CD14-positive monocyte (primary cell): ENCODE measurements at regions of chr1 and their contacts with region 1.

Region 1: DNA sequence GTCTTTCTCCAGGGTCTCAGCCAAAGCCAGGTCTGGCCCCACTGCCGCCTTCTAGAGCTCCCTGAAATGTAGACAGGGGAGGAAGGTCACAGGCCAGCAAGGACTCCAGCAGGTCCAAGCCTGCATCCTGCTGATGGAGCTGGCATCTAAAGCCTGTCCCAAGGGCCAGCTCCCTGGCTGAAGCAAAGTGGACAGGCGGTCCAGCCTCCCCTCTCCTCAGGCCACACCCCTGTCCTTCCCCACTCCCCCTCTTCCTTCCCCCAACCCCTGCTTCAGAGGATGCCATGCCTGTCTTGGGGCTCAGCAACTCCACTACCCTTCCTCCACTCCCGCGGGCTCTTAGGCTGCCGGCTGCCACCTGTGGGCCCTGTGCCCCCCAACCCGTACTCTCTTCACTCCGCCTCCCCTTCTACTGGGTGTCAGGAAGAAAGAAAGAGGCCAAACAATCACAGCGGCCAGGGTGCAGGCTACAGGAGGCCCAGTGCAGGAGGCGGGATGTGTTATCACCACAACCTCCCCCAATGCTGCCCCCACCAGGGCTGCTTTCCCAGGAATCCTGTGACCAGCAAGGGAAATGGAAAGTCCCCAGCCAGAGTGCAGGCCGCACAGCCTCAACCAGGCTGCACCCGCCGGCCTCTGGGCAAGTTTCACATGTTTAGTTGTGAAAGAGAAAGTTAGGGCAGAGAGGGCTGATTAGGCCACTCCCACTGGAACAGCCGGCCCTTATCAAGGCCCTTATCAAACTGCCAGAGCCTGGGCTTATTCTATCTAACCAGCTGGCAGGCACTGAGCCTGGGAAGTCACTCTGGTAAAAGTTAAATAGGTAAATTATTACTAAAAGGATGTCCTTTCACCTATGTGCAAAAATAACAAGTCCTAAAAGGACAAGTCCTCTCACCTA is 34.1 kb downstream of the ACOT7 start:
- DNase-seq: peak in 2 of 3 donors; percentile 14 to 16
- H3K4me3 ChIP-seq: no peak overlapping the region
- H3K4me3 Mint-ChIP-seq: peak overlapping the region; percentile 55 to 60
- H3K27ac ChIP-seq: no peak overlapping the region
- H3K27ac Mint-ChIP-seq: peak overlapping the region in 5 of 7 donors; percentile 46 to 70 (median 54)
- H3K4me1 ChIP-seq: peaks cover 9 to 19% of the 10 kb centered on the region in 2 donors
- H3K4me1 Mint-ChIP-seq: peaks cover 24% of the 10 kb centered on the region
- H3K27me3 ChIP-seq: no peaks in the 10 kb centered on the region
- H3K27me3 Mint-ChIP-seq: peaks cover 0 to 2% (median 0%) of the 10 kb centered on the region in 3 donors
- CTCF ChIP-seq: no peak

Region 2: GRCh38 chr1:6317098-6317760 is 42.2 kb before region 1 on chr1:
- intact Hi-C with region 1: no loop called
- DNase-seq: no peak
- H3K4me3 ChIP-seq: no peak overlapping the region
- H3K4me3 Mint-ChIP-seq: no peak overlapping the region
- H3K27ac ChIP-seq: no peak overlapping the region
- H3K27ac Mint-ChIP-seq: peak overlapping the region in 1 of 7 donors; percentile 9
- H3K4me1 ChIP-seq: no peaks in the 10 kb centered on the region
- H3K4me1 Mint-ChIP-seq: no peaks in the 10 kb centered on the region
- H3K27me3 ChIP-seq: no peaks in the 10 kb centered on the region
- H3K27me3 Mint-ChIP-seq: peaks cover 0 to 1% (median 0%) of the 10 kb centered on the region in 3 donors
- CTCF ChIP-seq: no peak

Region 3: DNA sequence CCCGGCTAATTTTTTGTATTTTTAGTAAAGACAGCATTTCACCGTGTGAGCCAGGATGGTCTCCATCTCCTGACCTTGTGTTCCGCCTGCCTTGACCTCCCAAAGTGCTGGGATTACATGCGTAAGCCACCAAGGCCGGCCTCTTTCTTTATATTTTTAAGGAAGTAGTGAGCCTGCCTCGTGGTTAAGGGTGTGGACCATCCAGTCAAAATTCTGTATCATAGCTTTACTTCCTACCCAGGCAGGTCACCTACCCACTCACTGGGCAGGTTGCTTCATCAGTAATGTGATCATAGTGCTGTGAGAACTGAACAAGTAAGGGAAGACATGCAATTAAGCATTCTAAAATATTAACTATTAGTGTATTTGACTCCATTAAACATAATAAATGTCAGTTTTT is 42.2 kb after region 1 on chr1:
- intact Hi-C with region 1: loop called (anchors 1 to 5 kb)
- DNase-seq: peak; percentile 82 to 86 (median 83)
- H3K4me3 ChIP-seq: no peak overlapping the region
- H3K4me3 Mint-ChIP-seq: no peak overlapping the region
- H3K27ac ChIP-seq: peak overlapping the region in 1 of 2 donors; percentile 31
- H3K27ac Mint-ChIP-seq: peak overlapping the region in 5 of 7 donors; percentile 57 to 84 (median 71)
- H3K4me1 ChIP-seq: peaks cover 4 to 11% of the 10 kb centered on the region in 2 donors
- H3K4me1 Mint-ChIP-seq: peaks cover 11% of the 10 kb centered on the region
- H3K27me3 ChIP-seq: no peaks in the 10 kb centered on the region
- H3K27me3 Mint-ChIP-seq: peaks cover 16 to 25% (median 23%) of the 10 kb centered on the region in 3 donors
- CTCF ChIP-seq: no peak

Region 4: DNA sequence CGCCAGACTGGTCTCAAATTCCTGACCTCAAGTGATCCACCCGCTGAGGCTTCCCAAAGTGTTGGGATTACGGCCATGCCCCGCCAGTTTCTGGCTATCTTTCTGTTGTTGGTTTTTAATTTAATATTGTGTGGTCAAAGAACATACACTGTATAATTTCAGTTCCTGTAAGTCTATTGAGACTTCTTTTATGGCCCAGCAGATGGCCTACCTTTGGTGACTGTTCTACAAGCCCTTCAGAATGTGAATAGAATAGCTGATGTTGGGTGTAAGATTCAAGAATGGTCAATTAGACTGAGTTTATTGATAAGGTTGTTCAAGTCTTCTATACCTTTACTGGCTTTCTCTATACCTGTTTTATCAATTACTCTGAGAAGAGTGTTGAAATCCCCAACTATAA is 49.6 kb after region 1 on chr1:
- intact Hi-C with region 1: loop called in 1 of 2 experiments (anchors 5 kb)
- DNase-seq: no peak
- H3K4me3 ChIP-seq: no peak overlapping the region
- H3K4me3 Mint-ChIP-seq: no peak overlapping the region
- H3K27ac ChIP-seq: no peak overlapping the region
- H3K27ac Mint-ChIP-seq: no peak overlapping the region
- H3K4me1 ChIP-seq: no peaks in the 10 kb centered on the region
- H3K4me1 Mint-ChIP-seq: no peaks in the 10 kb centered on the region
- H3K27me3 ChIP-seq: peaks cover 0 to 3% of the 10 kb centered on the region in 2 donors
- H3K27me3 Mint-ChIP-seq: peaks cover 28 to 54% (median 33%) of the 10 kb centered on the region in 3 donors
- CTCF ChIP-seq: no peak

Region 5: DNA sequence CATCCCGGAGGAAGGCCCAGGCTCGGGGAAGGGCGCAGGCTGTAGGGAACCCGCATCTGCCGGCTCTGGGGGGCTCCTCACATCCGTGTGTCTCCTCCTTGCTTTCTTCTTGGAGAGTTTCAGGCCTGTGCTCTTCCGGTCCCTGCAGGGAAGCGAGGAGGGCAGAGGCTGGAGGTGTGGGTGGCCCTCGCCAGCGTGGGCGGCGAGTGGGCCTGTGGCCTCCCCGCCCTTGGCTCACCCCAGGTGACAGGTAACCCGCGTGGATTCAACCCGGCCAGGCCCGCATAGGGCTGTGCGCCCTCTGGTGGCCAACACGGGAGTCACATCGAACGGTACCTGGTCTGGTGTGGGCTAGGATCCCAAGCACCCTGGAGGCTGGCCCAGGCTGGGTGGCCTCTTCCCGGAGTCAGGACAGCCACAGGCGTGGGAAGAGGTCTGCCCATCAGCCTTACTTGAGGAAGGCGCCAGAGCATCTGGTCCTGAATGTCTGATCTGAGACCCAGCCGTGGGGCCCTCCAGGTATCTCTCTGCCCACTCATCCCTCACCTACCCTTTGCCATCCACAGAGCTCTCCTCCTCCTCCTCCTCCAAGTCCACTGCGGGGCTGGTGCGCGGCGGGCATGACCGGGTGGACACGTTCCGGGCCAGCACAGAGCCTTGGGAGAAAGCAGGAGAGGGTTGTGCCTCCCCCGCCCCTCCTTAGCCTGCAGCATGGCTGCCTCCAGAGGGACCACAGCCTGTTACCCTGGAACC is 116.1 kb after region 1 on chr1:
- intact Hi-C with region 1: no loop called
- DNase-seq: peak; percentile 14 to 43 (median 33)
- H3K4me3 ChIP-seq: no peak overlapping the region
- H3K4me3 Mint-ChIP-seq: no peak overlapping the region
- H3K27ac ChIP-seq: no peak overlapping the region
- H3K27ac Mint-ChIP-seq: peak overlapping the region in 1 of 7 donors; percentile 68
- H3K4me1 ChIP-seq: no peaks in the 10 kb centered on the region
- H3K4me1 Mint-ChIP-seq: no peaks in the 10 kb centered on the region
- H3K27me3 ChIP-seq: no peaks in the 10 kb centered on the region
- H3K27me3 Mint-ChIP-seq: peaks cover 6 to 9% (median 6%) of the 10 kb centered on the region in 3 donors
- CTCF ChIP-seq: peak; percentile 97